Activated CD4-positive, alpha-beta T cell treated with anti-CD3 and anti-CD28 coated beads, Interleukin-2, amount 10 ng/mL, durations not matched to agents 7 days and 5 days (primary cell): ENCODE measurements at regions of chr3 and their contacts with region 1.

Region 1: GRCh38 chr3:170154569-170155143 is 26.9 kb downstream of the PHC3 start:
- DNase-seq: no peak
- H3K4me3 Mint-ChIP-seq: peak overlapping the region; percentile 53
- H3K27ac Mint-ChIP-seq: peak overlapping the region; percentile 92
- H3K4me1 Mint-ChIP-seq: peaks cover 48% of the 10 kb centered on the region
- H3K27me3 Mint-ChIP-seq: no peaks in the 10 kb centered on the region

Region 2: DNA sequence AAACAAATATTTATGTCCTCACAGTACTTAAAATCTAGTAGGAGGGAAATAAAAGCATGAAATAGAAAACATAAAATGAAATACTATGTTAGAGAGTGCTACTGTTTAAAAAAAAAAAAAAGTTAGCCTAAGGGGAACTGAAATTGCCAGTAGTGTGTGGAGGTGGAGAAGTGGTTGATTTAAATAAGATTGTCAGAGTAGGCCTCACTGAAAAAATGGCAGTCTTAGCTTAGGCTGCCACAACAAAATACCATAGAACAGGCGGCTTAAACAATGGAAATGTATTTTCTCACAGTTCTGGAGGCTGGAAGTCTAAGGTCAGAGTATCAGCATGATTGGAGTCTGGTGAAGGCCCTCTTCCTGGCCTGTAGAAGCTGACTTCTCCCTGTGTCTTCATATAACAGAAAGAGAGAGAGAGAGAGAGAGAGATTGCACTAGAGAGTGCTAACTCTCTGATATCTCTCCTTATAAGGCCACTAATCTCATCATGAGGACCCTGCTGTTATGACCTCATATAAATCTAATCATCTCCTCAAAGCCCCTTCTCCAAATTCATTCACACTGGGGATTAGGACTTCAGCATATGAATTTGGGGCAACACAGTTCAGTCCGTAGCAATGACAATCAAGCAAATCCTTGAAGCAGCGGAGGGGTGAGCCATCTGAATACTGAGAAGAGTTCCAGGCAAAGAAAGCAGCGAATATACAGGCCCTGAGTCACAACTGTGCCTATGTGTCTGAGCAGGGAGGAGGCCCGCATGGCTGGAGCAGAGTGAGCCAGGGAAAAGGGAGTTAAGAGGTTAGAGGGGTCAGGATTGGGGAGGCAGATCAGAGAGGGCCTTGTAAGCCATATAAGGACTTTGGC is 318.3 kb before region 1 on chr3:
- CTCF ChIA-PET with region 1: no interaction called
- POLR2A ChIA-PET with region 1: no interaction called
- DNase-seq: no peak
- H3K4me3 Mint-ChIP-seq: no peak overlapping the region
- H3K27ac Mint-ChIP-seq: no peak overlapping the region
- H3K4me1 Mint-ChIP-seq: no peaks in the 10 kb centered on the region
- H3K27me3 Mint-ChIP-seq: peaks cover 8% of the 10 kb centered on the region

Region 3: GRCh38 chr3:170132335-170132734 is 22.3 kb before region 1 on chr3:
- CTCF ChIA-PET with region 1: no interaction called
- POLR2A ChIA-PET with region 1: interaction called, 10 read pairs
- DNase-seq: peak; percentile 32
- H3K4me3 Mint-ChIP-seq: no peak overlapping the region
- H3K27ac Mint-ChIP-seq: peak overlapping the region; percentile 52
- H3K4me1 Mint-ChIP-seq: peaks cover 37% of the 10 kb centered on the region
- H3K27me3 Mint-ChIP-seq: no peaks in the 10 kb centered on the region